ENCODE measurements at regions of chr4 and their contacts with region 1.

Region 1: GRCh38 chr4:3442959-3443749 is 1.4 kb downstream of the HGFAC start:
- DNase-seq: no peak
- ATAC-seq: peak; percentile 68
- H3K4me3 ChIP-seq: no peak overlapping the region
- H3K27ac ChIP-seq: no peak overlapping the region
- H3K4me1 ChIP-seq: peaks cover 6% of the 10 kb centered on the region
- H3K27me3 ChIP-seq: no peaks in the 10 kb centered on the region
- CTCF ChIP-seq: peak; percentile 99

Region 2: DNA sequence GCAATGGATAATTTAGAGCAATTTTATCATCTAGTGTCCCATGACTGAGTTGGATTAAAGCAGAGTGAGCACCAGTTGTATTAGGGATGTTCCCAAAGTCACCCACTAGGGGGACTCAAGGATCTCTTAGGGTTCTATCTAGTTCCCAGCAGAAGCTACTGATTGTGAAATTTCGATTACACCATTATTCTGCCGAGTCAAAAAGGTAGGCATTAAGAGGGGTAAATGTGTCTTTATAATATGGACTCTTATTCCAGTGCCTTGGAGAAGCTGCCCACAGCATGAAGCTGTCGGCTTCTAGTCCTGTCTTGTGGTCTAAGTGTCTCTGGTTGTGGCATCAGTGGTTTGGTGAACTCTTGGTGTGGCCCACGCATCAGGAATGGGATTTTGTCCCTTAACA is 97.0 kb before region 1 on chr4:
- intact Hi-C with region 1: loop called (anchors 5 kb)
- DNase-seq: no peak
- ATAC-seq: peak; percentile 93
- H3K4me3 ChIP-seq: no peak overlapping the region
- H3K27ac ChIP-seq: no peak overlapping the region
- H3K4me1 ChIP-seq: peaks cover 5% of the 10 kb centered on the region
- H3K27me3 ChIP-seq: no peaks in the 10 kb centered on the region
- CTCF ChIP-seq: peak; percentile 90

Region 3: DNA sequence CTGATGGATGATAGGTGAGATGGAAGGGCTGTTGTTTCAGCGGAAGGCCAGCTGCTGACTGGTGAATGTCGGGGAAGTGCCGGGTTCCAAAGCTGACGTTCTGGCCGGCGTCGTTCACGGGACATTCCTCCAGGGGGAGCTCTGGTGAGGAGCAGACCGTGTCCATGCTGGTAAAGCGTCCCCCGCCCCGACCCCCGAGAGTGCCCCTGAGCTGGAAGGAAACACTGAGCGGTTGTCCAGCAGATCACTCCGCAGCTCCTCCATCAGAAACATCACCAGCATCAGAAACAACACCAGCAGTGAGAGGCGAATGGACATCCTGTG is 304.4 kb after region 1 on chr4:
- intact Hi-C with region 1: no loop called
- DNase-seq: no peak
- ATAC-seq: no peak
- H3K4me3 ChIP-seq: no peak overlapping the region
- H3K27ac ChIP-seq: no peak overlapping the region
- H3K4me1 ChIP-seq: no peaks in the 10 kb centered on the region
- H3K27me3 ChIP-seq: peaks cover 57% of the 10 kb centered on the region
- CTCF ChIP-seq: peak; percentile 39